Right ventricle myocardium inferior (tissue), 1 donor: ENCODE measurements at regions of chr10 and their contacts with region 1.

Region 1: GRCh38 chr10:20897146-20897825 is at the start of gene NEBL:
- DNase-seq: no peak
- ATAC-seq: peak; percentile 81
- total RNA-seq, gene NEBL: 666 TPM

Region 2: GRCh38 chr10:20908391-20908790 is 11.1 kb after region 1 on chr10:
- intact Hi-C with region 1: no loop called
- DNase-seq: no peak
- ATAC-seq: no peak

Region 3: GRCh38 chr10:20922451-20922850 is 25.2 kb after region 1 on chr10:
- intact Hi-C with region 1: no loop called
- DNase-seq: no peak
- ATAC-seq: no peak

Region 4: GRCh38 chr10:20956843-20957242 is 59.6 kb after region 1 on chr10:
- intact Hi-C with region 1: no loop called
- DNase-seq: no peak
- ATAC-seq: peak; percentile 56

Region 5: DNA sequence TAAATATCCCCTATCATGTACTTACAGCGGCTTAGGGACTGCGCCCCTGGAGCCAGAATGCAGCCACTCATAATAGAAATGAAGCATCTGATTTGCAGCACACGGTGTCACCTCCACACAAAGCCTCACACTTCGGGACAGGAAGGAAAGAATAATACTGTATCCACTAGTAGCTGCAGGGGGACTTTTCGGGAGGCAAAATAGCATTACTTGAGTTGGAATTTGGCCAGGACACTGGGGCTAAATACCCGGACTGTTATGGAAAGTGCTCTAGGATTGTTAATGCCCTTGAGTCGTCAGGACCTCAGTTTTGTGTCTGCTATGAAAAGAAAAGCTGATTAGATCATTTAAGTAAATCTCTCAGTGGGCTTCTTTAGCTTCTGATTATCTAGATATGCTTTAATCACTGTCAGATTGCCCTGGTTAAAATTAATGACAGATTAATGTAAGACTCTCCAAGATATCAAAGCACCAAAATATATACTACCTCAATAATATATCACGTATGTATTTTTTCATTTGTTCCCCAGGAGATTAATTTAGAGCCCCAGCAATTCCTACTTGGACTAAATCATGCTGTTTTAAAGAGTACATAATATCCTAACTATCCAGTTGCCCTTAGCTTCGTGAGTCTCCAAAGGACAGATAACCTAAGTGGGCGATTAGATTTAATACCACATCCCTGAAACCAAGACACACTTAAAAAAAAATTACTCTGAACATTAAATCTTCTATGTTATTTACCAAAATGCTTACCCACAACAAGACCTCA is 172.8 kb after region 1 on chr10:
- intact Hi-C with region 1: loop called (anchors 2 kb)
- DNase-seq: no peak
- ATAC-seq: peak; percentile 57